Right cardiac atrium (tissue), 5 donors: ENCODE measurements at regions of chr5 and their contacts with region 1.

Region 1: DNA sequence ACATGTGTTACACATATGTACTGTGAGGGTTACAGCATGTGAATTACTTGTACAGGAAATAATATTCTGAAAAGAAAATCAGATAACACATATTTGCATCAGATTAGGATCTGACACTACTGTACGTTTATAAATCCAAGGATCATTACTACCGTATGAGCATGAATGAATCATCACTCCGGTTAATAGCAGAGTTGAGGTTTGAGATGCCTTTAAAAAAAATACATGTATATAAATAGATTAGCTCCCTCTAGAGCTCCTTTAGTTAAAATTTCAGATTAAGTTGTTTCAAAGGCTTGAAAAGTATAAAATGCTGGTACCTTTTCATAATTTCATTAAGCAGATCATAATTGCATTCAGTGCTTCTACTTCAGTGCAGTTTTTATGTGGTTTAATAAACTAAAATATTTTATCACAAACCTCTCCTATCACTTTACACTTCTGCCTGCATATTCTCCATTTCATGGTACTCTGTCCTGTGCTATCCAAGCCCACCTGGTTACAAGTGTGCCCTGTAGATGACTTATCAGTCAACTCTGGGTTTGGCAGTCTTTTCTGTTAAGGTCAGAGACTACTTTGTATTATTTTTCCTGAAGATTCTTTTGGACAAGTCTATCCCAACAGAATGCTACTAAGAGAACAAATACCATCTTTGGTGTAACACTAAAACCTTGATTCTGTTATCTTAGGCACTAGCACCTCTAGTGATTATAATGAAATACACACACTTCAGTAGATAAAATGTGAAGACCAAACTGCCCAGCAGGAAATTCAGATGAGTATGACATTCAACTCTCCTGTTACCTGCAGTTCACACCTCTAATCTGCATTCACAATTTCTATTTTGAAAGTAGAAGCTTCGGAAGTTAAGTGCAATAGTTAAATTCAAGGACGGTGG is 48.0 kb upstream of the POU5F2 start:
- DNase-seq: no peak
- ATAC-seq: no peak
- H3K4me3 ChIP-seq: no peak overlapping the region
- H3K27ac ChIP-seq: no peak overlapping the region
- H3K4me1 ChIP-seq: no peaks in the 10 kb centered on the region
- H3K27me3 ChIP-seq: no peaks in the 10 kb centered on the region

Region 2: GRCh38 chr5:93607367-93608258 is 181.8 kb before region 1 on chr5:
- intact Hi-C with region 1: loop called in 2 of 4 experiments (anchors 10 kb)
- DNase-seq: peak in 1 of 3 donors; percentile 37
- ATAC-seq: peak; percentile 73 to 74
- H3K4me3 ChIP-seq: peak overlapping the region; percentile 1
- H3K27ac ChIP-seq: peak overlapping the region; percentile 34
- H3K4me1 ChIP-seq: no peaks in the 10 kb centered on the region
- H3K27me3 ChIP-seq: no peaks in the 10 kb centered on the region

Region 3: DNA sequence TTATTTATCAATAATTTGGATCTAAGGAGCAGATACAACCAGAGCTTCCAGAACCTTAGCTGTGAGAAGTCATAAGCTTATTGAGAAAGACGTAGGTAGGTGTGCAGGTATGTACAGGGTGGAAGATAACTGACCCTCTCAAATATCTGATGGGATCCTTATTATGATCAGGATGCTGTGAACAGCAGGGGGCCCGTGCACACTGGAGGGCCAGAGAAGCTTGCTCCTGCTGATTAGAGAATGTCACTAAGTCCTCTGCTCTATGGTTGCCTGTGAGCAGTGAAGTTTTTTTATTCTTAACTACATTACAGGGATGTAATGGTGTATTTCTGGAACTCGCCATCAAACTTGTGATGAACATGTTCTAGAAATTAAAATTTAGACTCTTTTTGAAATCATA is 60.9 kb after region 1 on chr5:
- intact Hi-C with region 1: no loop called
- DNase-seq: no peak
- ATAC-seq: no peak
- H3K4me3 ChIP-seq: no peak overlapping the region
- H3K27ac ChIP-seq: no peak overlapping the region
- H3K4me1 ChIP-seq: no peaks in the 10 kb centered on the region
- H3K27me3 ChIP-seq: no peaks in the 10 kb centered on the region

Region 4: DNA sequence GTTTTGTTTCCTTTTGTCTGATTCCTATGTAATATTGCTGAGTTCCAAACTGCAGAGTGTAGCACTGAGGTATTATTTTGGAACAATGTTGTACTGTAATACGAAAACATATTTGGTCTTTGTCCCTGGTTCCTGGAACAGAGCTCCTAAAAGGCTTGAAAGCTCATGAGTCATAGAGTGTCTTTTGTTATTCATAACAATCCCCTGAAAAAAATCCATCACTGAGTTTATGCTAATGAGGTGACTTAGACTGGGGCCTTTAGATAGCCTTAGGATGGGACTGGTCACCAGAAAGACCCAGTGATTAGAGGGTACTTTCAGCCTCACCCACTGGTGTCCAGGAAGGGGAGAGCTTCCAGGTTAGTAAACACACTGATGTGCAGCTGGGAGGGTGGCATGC is 84.7 kb after region 1 on chr5:
- intact Hi-C with region 1: no loop called
- DNase-seq: no peak
- ATAC-seq: no peak
- H3K4me3 ChIP-seq: no peak overlapping the region
- H3K27ac ChIP-seq: no peak overlapping the region
- H3K4me1 ChIP-seq: no peaks in the 10 kb centered on the region
- H3K27me3 ChIP-seq: no peaks in the 10 kb centered on the region